ENCODE measurements at regions of chr2 and their contacts with region 1.

Region 1: DNA sequence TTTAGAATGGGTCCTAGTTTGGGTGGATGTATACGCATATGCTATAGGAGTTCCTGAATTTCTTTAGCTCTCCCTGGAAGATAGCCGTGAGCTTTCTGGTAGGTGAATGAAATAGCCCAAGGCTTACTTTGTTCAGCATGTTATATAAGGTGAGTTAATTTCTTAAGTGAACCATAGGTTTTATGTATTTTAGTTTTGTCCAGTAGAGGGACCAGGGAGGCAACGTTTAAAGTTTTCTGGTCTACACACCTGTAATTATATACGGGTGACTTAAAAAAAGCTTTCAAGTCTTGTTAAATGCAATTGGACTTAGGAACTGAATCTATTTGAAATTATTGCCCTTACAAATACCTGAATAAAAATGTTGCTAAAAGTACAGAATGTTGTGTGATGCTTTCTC is 402.5 kb upstream of the DDX18 start:
- DNase-seq: no peak
- H3K4me3 Mint-ChIP-seq: no peak overlapping the region
- H3K27ac Mint-ChIP-seq: peak overlapping the region; percentile 32
- H3K4me1 Mint-ChIP-seq: peaks cover 42% of the 10 kb centered on the region
- H3K27me3 Mint-ChIP-seq: no peaks in the 10 kb centered on the region
- CTCF ChIP-seq: no peak

Region 2: DNA sequence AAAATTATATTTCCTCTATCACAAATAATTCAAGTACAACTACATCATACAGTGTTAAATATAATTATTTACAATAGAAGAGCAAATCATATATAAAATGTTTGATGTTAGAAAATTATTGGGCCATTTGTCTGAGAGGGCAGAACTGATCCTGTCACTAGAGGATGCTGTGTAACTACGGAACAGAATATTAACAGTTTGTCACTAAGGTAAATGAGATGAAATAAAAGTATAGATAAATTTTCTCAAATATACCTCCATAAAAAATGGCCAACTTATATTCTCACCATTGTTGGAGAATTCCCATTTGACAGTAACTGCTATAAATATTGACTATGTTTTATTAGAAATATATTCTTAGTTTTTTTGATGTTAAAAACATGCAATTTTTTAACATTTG is 664.9 kb before region 1 on chr2:
- CTCF ChIA-PET with region 1: no interaction called
- intact Hi-C with region 1: loop called (anchors 2 kb)
- DNase-seq: no peak
- H3K4me3 Mint-ChIP-seq: no peak overlapping the region
- H3K27ac Mint-ChIP-seq: no peak overlapping the region
- H3K4me1 Mint-ChIP-seq: no peaks in the 10 kb centered on the region
- H3K27me3 Mint-ChIP-seq: no peaks in the 10 kb centered on the region
- CTCF ChIP-seq: no peak

Region 3: GRCh38 chr2:116891191-116891590 is 520.8 kb before region 1 on chr2:
- CTCF ChIA-PET with region 1: no interaction called
- intact Hi-C with region 1: no loop called
- DNase-seq: no peak
- H3K4me3 Mint-ChIP-seq: no peak overlapping the region
- H3K27ac Mint-ChIP-seq: no peak overlapping the region
- H3K4me1 Mint-ChIP-seq: no peaks in the 10 kb centered on the region
- H3K27me3 Mint-ChIP-seq: no peaks in the 10 kb centered on the region
- CTCF ChIP-seq: no peak

Region 4: GRCh38 chr2:117128461-117128860 is 283.5 kb before region 1 on chr2:
- CTCF ChIA-PET with region 1: no interaction called
- intact Hi-C with region 1: loop called (anchors 1 kb)
- DNase-seq: peak; percentile 68
- H3K4me3 Mint-ChIP-seq: peak overlapping the region; percentile 10
- H3K27ac Mint-ChIP-seq: peak overlapping the region; percentile 79
- H3K4me1 Mint-ChIP-seq: peaks cover 40% of the 10 kb centered on the region
- H3K27me3 Mint-ChIP-seq: no peaks in the 10 kb centered on the region
- CTCF ChIP-seq: no peak

Region 5: DNA sequence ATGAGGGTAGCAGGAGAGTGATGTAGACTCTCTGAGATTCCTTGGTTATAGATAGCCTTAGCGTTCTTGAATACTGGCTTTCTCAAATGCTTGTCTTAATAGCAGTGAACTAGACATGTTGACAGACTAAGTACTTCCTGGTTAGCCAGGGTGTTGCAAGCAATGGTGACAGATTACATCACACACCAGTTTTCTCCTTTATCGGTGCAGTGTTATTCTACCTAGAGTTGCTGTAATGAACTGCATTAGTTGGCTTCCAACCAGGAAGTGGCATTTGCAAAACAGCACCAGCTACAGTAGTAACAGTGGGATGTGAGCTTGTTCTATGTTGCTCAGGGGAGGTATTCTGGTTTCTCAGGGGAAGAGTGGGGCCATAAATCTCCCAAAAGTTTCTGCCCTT is 179.7 kb before region 1 on chr2:
- CTCF ChIA-PET with region 1: no interaction called
- intact Hi-C with region 1: loop called (anchors 5 kb)
- DNase-seq: peak; percentile 59
- H3K4me3 Mint-ChIP-seq: no peak overlapping the region
- H3K27ac Mint-ChIP-seq: peak overlapping the region; percentile 99
- H3K4me1 Mint-ChIP-seq: peaks cover 18% of the 10 kb centered on the region
- H3K27me3 Mint-ChIP-seq: no peaks in the 10 kb centered on the region
- CTCF ChIP-seq: no peak

Region 6: GRCh38 chr2:117330641-117331040 is 81.3 kb before region 1 on chr2:
- CTCF ChIA-PET with region 1: interaction called, 5 read pairs
- intact Hi-C with region 1: loop called (anchors 5 kb)
- DNase-seq: peak; percentile 18
- H3K4me3 Mint-ChIP-seq: peak overlapping the region; percentile 21
- H3K27ac Mint-ChIP-seq: peak overlapping the region; percentile 60
- H3K4me1 Mint-ChIP-seq: peaks cover 42% of the 10 kb centered on the region
- H3K27me3 Mint-ChIP-seq: no peaks in the 10 kb centered on the region
- CTCF ChIP-seq: no peak

Region 7: GRCh38 chr2:117536139-117536538 is 124.2 kb after region 1 on chr2:
- CTCF ChIA-PET with region 1: no interaction called
- intact Hi-C with region 1: loop called (anchors 5 kb)
- DNase-seq: peak; percentile 37
- H3K4me3 Mint-ChIP-seq: no peak overlapping the region
- H3K27ac Mint-ChIP-seq: no peak overlapping the region
- H3K4me1 Mint-ChIP-seq: no peaks in the 10 kb centered on the region
- H3K27me3 Mint-ChIP-seq: no peaks in the 10 kb centered on the region
- CTCF ChIP-seq: peak; percentile 63

Region 8: GRCh38 chr2:117771969-117772630 is 360.1 kb after region 1 on chr2:
- CTCF ChIA-PET with region 1: no interaction called
- intact Hi-C with region 1: loop called (anchors 5 kb)
- DNase-seq: no peak
- H3K4me3 Mint-ChIP-seq: no peak overlapping the region
- H3K27ac Mint-ChIP-seq: no peak overlapping the region
- H3K4me1 Mint-ChIP-seq: peaks cover 8% of the 10 kb centered on the region
- H3K27me3 Mint-ChIP-seq: peaks cover 13% of the 10 kb centered on the region
- CTCF ChIP-seq: peak; percentile 55